Esophagus muscularis mucosa (tissue), 4 donors: ENCODE measurements at regions of chr17 and their contacts with region 1.

Region 1: DNA sequence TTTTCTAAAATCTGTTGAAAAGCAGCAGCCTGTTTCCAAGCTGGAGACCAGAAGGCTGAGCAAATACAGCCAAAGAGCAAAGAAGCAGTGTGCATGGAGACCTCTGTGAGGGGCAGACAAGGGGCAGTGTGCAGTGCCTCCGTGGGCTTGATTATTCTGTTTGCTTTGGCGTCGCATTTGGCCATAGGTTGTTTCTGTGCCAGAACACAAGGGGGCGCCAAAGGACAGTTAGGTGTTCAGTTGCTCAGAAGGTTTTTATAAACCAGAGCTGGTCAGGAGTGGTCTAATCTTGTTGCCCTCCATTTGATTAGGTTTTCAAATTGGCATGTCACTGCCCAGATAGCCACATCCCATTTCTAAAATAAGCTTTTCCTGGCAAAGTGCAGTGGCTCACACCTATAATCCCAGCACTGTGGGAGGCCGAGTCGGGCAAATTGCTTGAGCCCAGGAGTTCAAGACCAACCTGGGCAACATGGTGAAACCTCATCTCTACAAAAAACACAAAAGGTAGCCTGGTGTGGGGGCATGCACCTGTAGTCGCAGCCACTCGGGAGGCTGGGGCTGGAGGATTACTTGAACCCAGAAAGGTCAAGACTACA is 10.6 kb downstream of the MYH3 start:
- DNase-seq: peak; percentile 93
- H3K4me3 ChIP-seq: no peak overlapping the region
- H3K27ac ChIP-seq: no peak overlapping the region
- H3K4me1 ChIP-seq: no peaks in the 10 kb centered on the region
- H3K27me3 ChIP-seq: no peaks in the 10 kb centered on the region
- CTCF ChIP-seq: peak; percentile 75 to 89 (median 79)
- EP300 ChIP-seq: no peak
- POLR2A ChIP-seq: no peak

Region 2: DNA sequence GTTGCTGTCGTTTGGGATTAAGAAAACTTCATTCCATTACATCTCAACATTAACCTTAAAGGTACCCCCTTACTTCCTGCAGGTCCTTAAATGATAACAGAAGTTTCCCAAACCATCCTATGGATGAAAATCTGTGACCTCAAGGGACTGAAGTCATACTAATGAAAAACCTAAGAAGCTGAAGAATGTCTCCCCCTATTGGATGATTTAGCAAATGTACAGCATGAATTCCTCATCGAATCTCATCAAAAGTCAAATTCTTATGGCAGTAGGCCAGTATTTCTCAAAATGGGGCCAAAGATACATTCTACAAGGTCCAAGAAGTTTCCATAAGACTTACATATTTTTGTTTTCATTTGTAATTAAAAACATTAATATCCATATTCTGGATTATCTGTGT is 37.4 kb after region 1 on chr17:
- intact Hi-C with region 1: loop called (anchors 5 kb)
- DNase-seq: no peak
- H3K4me3 ChIP-seq: no peak overlapping the region
- H3K27ac ChIP-seq: peak overlapping the region in 1 of 4 donors; percentile 1
- H3K4me1 ChIP-seq: peaks cover 0 to 18% (median 13%) of the 10 kb centered on the region in 4 donors
- H3K27me3 ChIP-seq: no peaks in the 10 kb centered on the region
- CTCF ChIP-seq: peak in 2 of 3 experiments; percentile 12 to 42
- EP300 ChIP-seq: no peak
- POLR2A ChIP-seq: no peak

Region 3: GRCh38 chr17:10729334-10730193 is 83.1 kb after region 1 on chr17 and contains the start of gene TMEM220:
- intact Hi-C with region 1: loop called (anchors 10 kb)
- DNase-seq: peak; percentile 94
- H3K4me3 ChIP-seq: peak within 1 kb of the TSS; percentile 74 to 82 (median 78)
- H3K27ac ChIP-seq: peak within 1 kb of the TSS; percentile 95 to 96 (median 95)
- H3K4me1 ChIP-seq: peaks cover 2 to 23% (median 20%) of the 10 kb centered on the region in 4 donors
- H3K27me3 ChIP-seq: no peaks in the 10 kb centered on the region
- CTCF ChIP-seq: no peak
- EP300 ChIP-seq: no peak
- POLR2A ChIP-seq: peak; percentile 26
- total RNA-seq, gene TMEM220: 7.5 to 15.4 (median 11.1) TPM

Region 4: GRCh38 chr17:10844621-10845387 is 198.3 kb after region 1 on chr17:
- intact Hi-C with region 1: loop called (anchors 5 kb)
- DNase-seq: no peak
- H3K4me3 ChIP-seq: peak overlapping the region; percentile 54 to 65 (median 56)
- H3K27ac ChIP-seq: peak overlapping the region in 1 of 4 donors; percentile 31
- H3K4me1 ChIP-seq: peaks cover 9 to 13% (median 11%) of the 10 kb centered on the region in 4 donors
- H3K27me3 ChIP-seq: no peaks in the 10 kb centered on the region
- CTCF ChIP-seq: peak; percentile 91 to 95 (median 91)
- EP300 ChIP-seq: no peak
- POLR2A ChIP-seq: no peak